ENCODE measurements at regions of chr20 and their contacts with region 1.

Region 1: GRCh38 chr20:49541733-49542513 is 26.0 kb downstream of the PTGIS start:
- DNase-seq: peak; percentile 84
- ATAC-seq: peak; percentile 87
- H3K4me3 Mint-ChIP-seq: no peak overlapping the region
- H3K27ac Mint-ChIP-seq: peak overlapping the region; percentile 85
- H3K4me1 Mint-ChIP-seq: peaks cover 10% of the 10 kb centered on the region
- H3K27me3 Mint-ChIP-seq: peaks cover 11% of the 10 kb centered on the region

Region 2: DNA sequence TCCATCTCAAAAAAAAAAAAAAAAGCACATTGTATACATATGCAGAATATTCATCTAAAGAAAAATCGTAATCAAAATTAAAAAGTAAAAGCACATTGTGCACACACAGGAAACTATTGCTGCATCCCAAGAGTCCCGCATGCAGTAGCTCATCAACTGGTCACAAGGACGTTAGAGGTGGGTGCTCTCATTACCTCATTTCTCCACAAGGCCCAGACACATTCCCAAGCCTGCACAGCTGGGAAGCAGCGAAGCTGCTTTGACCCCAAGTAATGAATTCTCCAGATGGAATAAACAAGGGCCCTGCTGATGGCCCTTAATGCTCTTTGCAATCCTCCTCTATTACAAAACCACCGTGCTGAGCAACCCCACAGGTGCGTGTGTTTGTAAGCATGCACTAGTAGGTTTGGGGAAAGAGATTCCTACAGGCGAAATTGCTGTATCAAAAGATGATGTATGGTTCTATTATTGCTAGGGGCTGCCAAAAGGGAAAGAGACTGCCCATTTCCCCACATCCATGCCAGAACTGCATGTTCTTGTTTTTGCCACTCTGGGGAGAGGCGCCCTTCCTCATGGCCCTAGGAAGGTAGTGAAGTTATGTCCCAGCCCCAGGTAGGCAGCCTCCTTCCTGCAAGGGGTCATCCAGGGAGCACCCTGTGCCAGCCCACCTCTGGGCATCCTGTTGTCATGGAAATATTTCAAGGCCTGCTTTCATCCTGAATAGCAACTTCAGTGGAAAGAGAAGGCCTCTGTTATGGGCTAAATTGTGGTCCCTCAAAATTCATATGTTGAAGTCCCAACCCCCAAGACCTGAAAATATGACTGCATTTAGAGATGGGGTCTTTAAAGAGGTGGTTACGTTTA is 60.7 kb after region 1 on chr20:
- CTCF ChIA-PET with region 1: interaction called, 145 read pairs
- POLR2A ChIA-PET with region 1: no interaction called
- intact Hi-C with region 1: no loop called
- DNase-seq: no peak
- ATAC-seq: no peak
- H3K4me3 Mint-ChIP-seq: no peak overlapping the region
- H3K27ac Mint-ChIP-seq: no peak overlapping the region
- H3K4me1 Mint-ChIP-seq: peaks cover 3% of the 10 kb centered on the region
- H3K27me3 Mint-ChIP-seq: peaks cover 6% of the 10 kb centered on the region

Region 3: GRCh38 chr20:49846206-49846807 is 304.4 kb after region 1 on chr20:
- CTCF ChIA-PET with region 1: interaction called, 14 read pairs
- POLR2A ChIA-PET with region 1: no interaction called
- intact Hi-C with region 1: loop called (anchors 1 to 2 kb)
- DNase-seq: peak; percentile 67
- ATAC-seq: peak; percentile 81
- H3K4me3 Mint-ChIP-seq: no peak overlapping the region
- H3K27ac Mint-ChIP-seq: no peak overlapping the region
- H3K4me1 Mint-ChIP-seq: peaks cover 7% of the 10 kb centered on the region
- H3K27me3 Mint-ChIP-seq: no peaks in the 10 kb centered on the region

Region 4: GRCh38 chr20:49888345-49888966 is 346.5 kb after region 1 on chr20:
- CTCF ChIA-PET with region 1: interaction called, 4 read pairs
- POLR2A ChIA-PET with region 1: no interaction called
- intact Hi-C with region 1: loop called in 1 of 2 experiments (anchors 5 kb)
- DNase-seq: peak; percentile 77
- ATAC-seq: peak; percentile 60
- H3K4me3 Mint-ChIP-seq: no peak overlapping the region
- H3K27ac Mint-ChIP-seq: peak overlapping the region; percentile 51
- H3K4me1 Mint-ChIP-seq: peaks cover 14% of the 10 kb centered on the region
- H3K27me3 Mint-ChIP-seq: no peaks in the 10 kb centered on the region

Region 5: GRCh38 chr20:49928401-49929141 is 386.6 kb after region 1 on chr20:
- CTCF ChIA-PET with region 1: no interaction called
- POLR2A ChIA-PET with region 1: no interaction called
- intact Hi-C with region 1: loop called in 1 of 2 experiments (anchors 1 kb)
- DNase-seq: peak; percentile 90
- ATAC-seq: peak; percentile 98
- H3K4me3 Mint-ChIP-seq: no peak overlapping the region
- H3K27ac Mint-ChIP-seq: peak overlapping the region; percentile 63
- H3K4me1 Mint-ChIP-seq: peaks cover 6% of the 10 kb centered on the region
- H3K27me3 Mint-ChIP-seq: peaks cover 2% of the 10 kb centered on the region